K562 (cell line): ENCODE measurements at regions of chr2 and their contacts with region 1.

Region 1: DNA sequence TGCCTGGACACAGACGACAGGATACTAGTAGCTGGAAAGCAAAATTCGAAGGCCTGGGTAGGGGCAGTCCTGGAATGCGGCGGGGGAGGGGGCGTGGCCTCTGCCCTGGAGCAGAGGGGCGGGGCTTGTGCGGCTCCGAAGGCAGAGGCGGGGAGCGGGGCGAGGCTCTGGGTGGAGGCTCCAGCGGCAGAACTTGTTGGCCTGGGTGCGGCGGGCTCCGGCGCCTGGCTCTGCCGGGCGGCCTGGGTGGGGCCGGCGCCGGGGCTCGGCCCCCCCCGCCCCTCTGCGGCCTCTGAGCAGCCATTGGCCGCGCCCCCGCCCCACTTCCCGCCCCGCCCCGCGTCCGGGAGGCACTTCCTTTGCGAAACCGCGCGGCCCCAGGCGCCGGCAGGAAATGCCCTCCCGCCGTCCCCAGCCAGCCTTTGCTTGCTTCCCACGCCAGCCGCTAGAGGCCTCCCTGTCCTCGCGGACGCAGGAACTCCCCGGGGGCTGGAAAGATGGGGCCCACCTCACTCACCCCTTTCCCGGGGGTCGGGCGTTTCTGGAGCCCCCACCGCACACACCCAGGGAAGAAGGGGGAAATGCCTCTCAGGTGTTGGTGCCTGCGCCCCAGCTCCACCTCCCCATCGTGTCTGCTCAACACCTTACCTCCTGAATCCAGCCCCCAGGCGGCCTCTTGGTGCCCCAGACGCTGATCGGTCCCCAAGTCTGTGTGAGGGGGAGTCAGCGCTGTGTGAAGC is 6.7 kb downstream of the CTDSP1 start:
- DNase-seq: peak; percentile 86 to 93 (median 90)
- ATAC-seq: peak; percentile 93
- H3K4me3 ChIP-seq: peak overlapping the region; percentile 44
- H3K27ac ChIP-seq: peak overlapping the region; percentile 78
- H3K4me1 ChIP-seq: peaks cover 25 to 67% of the 10 kb centered on the region in 2 experiments; a peak in 4 of 5 replicates
- H3K27me3 ChIP-seq: no peaks in the 10 kb centered on the region
- CTCF ChIP-seq: peak; percentile 71 to 85 (median 76)
- EP300 ChIP-seq: no peak; the same call in 1 of the 2 replicates
- POLR2A ChIP-seq: 0 out of 2 replicates have a peak, but pooled peaks have one; percentile 0
- RAD21 ChIP-seq: peak; percentile 67 to 69

Region 2: DNA sequence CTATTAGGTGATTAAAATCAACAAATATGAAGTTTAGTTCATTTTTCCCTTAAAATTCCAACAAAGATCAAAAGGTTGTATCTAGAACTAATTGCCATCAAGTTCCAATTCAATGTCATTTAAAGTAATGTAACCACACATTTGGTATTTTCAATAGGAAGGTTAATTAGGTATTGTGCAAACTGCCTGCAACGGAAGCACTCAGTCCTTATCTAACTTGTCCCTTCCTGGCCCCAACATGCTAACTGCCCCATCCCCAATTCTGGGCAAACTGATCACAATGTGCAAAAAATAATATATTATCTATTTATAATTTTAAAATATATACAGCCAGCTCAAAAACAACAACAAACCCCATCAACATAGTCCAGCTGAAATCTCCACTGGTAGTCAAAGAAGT is 45.7 kb after region 1 on chr2:
- CTCF ChIA-PET with region 1: no interaction called
- POLR2A ChIA-PET with region 1: no interaction called
- in situ Hi-C with region 1: no loop called
- intact Hi-C with region 1: loop called (anchors 5 kb)
- DNase-seq: peak in 1 of 4 experiments; percentile 8
- ATAC-seq: peak; percentile 59; the same call in 1 of the 3 replicates
- H3K4me3 ChIP-seq: no peak overlapping the region
- H3K27ac ChIP-seq: peak overlapping the region; percentile 47; the same call in 1 of the 3 replicates
- H3K4me1 ChIP-seq: peaks cover 0 to 3% of the 10 kb centered on the region in 2 experiments; a peak in 2 of 5 replicates
- H3K27me3 ChIP-seq: no peaks in the 10 kb centered on the region
- CTCF ChIP-seq: no peak
- EP300 ChIP-seq: no peak
- POLR2A ChIP-seq: no peak
- RAD21 ChIP-seq: no peak

Region 3: DNA sequence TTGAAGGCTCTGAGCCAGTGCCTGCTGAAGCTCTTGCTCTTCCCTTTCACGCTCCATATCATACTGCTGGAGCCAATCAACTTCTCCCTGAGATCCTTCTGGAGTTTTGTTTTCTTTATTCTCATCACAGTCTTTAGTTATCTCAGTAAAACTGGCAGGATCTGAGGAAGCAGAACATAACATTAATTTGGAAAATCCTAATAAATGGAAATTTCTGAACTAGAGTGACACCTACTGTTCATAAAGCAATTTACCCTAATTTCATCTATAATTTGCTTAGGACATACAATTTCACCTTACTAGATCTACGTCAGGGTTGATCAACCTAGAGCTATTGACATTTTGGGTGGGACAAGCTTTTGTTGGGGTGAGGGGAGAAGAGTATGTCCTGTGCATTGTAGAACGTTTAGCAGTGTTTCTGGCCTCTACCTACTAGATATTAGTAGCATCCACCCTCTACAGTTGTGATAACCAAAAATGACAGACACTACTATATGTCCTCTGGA is 59.7 kb after region 1 on chr2:
- CTCF ChIA-PET with region 1: interaction called, 8 read pairs
- POLR2A ChIA-PET with region 1: no interaction called
- in situ Hi-C with region 1: no loop called
- intact Hi-C with region 1: loop called (anchors 1 kb)
- DNase-seq: peak in 1 of 4 experiments; percentile 12
- ATAC-seq: peak; percentile 67
- H3K4me3 ChIP-seq: no peak overlapping the region
- H3K27ac ChIP-seq: no peak overlapping the region
- H3K4me1 ChIP-seq: peaks cover 0 to under 1% of the 10 kb centered on the region in 2 experiments; a peak in 1 of 5 replicates
- H3K27me3 ChIP-seq: no peaks in the 10 kb centered on the region
- CTCF ChIP-seq: peak; percentile 17 to 52 (median 29); a peak in 3 of 6 replicates
- EP300 ChIP-seq: no peak
- POLR2A ChIP-seq: no peak
- RAD21 ChIP-seq: peak; percentile 34 to 56

Region 4: DNA sequence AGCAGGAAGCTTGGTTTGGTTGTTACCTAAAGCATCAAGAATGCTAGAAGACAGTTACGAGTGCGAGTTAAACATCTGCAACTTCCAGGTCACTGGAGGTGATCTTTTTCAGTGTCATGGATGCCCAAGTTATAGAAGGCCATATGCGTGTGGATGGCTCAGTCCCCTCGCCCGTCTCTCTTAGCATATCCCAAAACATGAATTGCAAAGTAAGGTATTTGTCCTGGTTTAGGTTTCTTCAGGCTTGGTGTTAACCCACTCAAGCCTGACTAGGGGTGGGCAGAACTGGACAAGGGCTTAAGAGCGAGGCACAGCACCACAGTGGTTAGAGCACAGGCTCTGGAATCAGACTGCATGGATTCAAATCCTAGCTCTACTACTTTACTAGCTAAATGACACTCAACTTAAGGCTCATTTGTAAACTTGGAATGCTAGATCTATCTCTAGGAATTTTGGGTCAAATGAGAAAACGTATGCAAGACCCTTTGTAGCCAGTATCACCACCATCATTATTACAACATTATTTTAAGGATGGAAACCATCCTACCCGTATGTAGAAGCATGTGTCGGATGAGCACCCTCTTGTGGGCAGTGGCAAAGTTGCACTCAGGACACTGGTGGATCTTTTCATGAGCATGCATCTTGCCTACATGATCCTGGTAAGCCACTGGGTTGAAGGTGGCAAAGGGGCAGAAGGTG is 241.9 kb after region 1 on chr2:
- CTCF ChIA-PET with region 1: no interaction called
- POLR2A ChIA-PET with region 1: no interaction called
- in situ Hi-C with region 1: no loop called
- intact Hi-C with region 1: loop called (anchors 10 kb)
- DNase-seq: peak; percentile 23 to 50 (median 44)
- ATAC-seq: peak; percentile 93
- H3K4me3 ChIP-seq: no peak overlapping the region
- H3K27ac ChIP-seq: no peak overlapping the region
- H3K4me1 ChIP-seq: no peaks in the 10 kb centered on the region
- H3K27me3 ChIP-seq: no peaks in the 10 kb centered on the region
- CTCF ChIP-seq: peak; percentile 62 to 82 (median 68)
- EP300 ChIP-seq: no peak
- POLR2A ChIP-seq: no peak
- RAD21 ChIP-seq: peak; percentile 33 to 51

Region 5: GRCh38 chr2:218710687-218711549 is 304.5 kb after region 1 on chr2 and contains the start of gene TTLL4:
- CTCF ChIA-PET with region 1: no interaction called
- POLR2A ChIA-PET with region 1: no interaction called
- in situ Hi-C with region 1: no loop called
- intact Hi-C with region 1: no loop called
- DNase-seq: peak; percentile 96 to 98 (median 98)
- ATAC-seq: peak; percentile 98
- H3K4me3 ChIP-seq: peak within 1 kb of the TSS; percentile 85
- H3K27ac ChIP-seq: peak within 1 kb of the TSS; percentile 79
- H3K4me1 ChIP-seq: peaks cover 13 to 14% of the 10 kb centered on the region in 2 experiments
- H3K27me3 ChIP-seq: no peaks in the 10 kb centered on the region
- CTCF ChIP-seq: peak; percentile 71 to 89 (median 81)
- EP300 ChIP-seq: no peak
- POLR2A ChIP-seq: peak; percentile 79
- RAD21 ChIP-seq: peak; percentile 64 to 71
- polyA plus RNA-seq, gene TTLL4: 20.3 to 30.8 TPM